ENCODE measurements at regions of chr16 and their contacts with region 1.

Region 1: GRCh38 chr16:66650707-66651473 is 45.7 kb downstream of the CMTM4 start:
- DNase-seq: peak; percentile 55
- H3K4me3 ChIP-seq: peak overlapping the region; percentile 5; the same call in 1 of the 2 replicates
- H3K27ac ChIP-seq: no peak overlapping the region
- H3K27me3 ChIP-seq: no peaks in the 10 kb centered on the region
- CTCF ChIP-seq: peak; percentile 96

Region 2: DNA sequence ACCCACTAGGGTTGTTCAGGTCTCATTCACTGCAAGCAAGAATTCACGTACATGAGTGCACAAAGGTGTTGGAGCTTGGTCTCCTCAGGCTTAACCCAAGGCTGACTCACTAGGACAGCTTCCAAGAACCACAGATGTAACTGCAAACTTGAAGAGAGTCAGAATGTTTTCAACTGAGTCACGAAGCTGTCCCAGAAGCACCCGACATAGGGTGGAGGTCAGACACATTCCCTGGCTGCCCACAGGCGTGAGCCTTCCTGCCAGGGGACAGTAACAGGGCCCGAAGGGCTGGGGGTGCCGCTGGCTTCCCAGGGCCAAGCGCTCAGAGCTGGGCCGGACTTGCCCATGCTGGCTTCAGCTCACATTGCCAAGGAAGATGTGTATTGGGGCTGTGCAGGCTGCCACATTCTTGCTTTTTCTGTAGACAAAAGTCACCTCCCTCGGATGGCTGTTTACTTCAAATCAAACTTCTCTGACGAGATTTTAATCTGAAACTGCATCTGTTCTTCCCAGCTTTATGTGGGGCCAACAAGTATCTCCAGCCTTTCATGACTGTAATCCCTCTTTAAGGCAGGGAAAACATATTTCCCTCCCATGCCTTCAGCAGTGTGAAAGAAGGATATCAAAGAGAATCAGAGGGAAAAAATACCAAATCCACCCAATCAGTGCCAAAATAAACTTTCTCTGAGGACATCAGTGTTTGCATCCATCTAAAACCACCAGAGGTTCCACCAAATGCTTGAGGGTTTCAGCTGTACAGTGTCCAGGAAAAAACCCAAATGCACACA is 32.1 kb before region 1 on chr16:
- CTCF ChIA-PET with region 1: interaction called, 33 read pairs
- POLR2A ChIA-PET with region 1: no interaction called
- DNase-seq: peak; percentile 81
- H3K4me3 ChIP-seq: no peak overlapping the region
- H3K27ac ChIP-seq: peak overlapping the region; percentile 88
- H3K27me3 ChIP-seq: no peaks in the 10 kb centered on the region
- CTCF ChIP-seq: no peak

Region 3: GRCh38 chr16:66639091-66639885 is 11.6 kb before region 1 on chr16:
- CTCF ChIA-PET with region 1: interaction called, 49 read pairs
- POLR2A ChIA-PET with region 1: interaction called, 3 read pairs
- DNase-seq: no peak
- H3K4me3 ChIP-seq: no peak overlapping the region
- H3K27ac ChIP-seq: no peak overlapping the region
- H3K27me3 ChIP-seq: no peaks in the 10 kb centered on the region
- CTCF ChIP-seq: no peak

Region 4: GRCh38 chr16:66728117-66728787 is 77.4 kb after region 1 on chr16:
- CTCF ChIA-PET with region 1: interaction called, 12 read pairs
- POLR2A ChIA-PET with region 1: no interaction called
- DNase-seq: no peak
- H3K4me3 ChIP-seq: no peak overlapping the region
- H3K27ac ChIP-seq: no peak overlapping the region
- H3K27me3 ChIP-seq: no peaks in the 10 kb centered on the region
- CTCF ChIP-seq: peak; percentile 66

Region 5: DNA sequence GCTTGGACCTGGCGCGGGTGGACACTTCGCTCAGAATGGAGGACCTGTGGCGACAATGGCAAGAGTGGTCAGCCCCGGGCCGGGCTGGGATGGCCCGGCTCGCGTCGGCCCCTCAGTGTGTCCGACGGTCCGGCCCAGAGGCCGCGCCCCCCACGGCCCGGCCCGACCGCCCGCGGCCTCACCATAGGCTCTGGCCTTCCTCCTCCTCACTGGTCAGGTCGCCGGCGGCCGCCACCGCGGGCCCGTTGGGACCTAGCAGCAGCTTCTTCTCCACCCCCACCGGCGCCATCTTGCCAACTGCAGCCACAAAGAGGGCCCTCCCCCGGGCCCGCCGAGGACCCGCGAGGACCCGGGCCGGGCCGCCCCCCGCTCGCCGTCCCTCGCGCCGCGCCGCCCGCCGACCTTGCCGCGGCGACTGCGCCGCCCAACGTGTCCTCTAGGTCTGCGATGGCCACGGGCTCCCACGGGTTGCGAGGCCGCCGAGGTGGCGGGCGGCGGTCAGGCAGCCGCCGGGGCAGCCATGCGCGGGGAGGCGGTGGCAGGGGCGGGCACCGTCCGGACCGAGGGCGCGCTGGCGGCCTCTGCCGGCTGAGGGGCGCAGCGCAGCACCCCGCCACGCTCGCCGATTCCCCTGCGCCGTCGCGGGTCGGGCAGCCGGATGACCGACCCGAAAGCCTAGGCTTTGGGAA is 100.6 kb after region 1 on chr16 and contains the start of gene DYNC1LI2:
- CTCF ChIA-PET with region 1: interaction called, 17 read pairs
- POLR2A ChIA-PET with region 1: no interaction called
- DNase-seq: peak; percentile 20
- H3K4me3 ChIP-seq: peak within 1 kb of the TSS; percentile 97
- H3K27ac ChIP-seq: peak within 1 kb of the TSS; percentile 31
- H3K27me3 ChIP-seq: peaks cover 6% of the 10 kb centered on the region
- CTCF ChIP-seq: peak; percentile 58
- polyA plus RNA-seq, gene DYNC1LI2: 86.7 and 88.5 TPM in 2 replicates

Region 6: GRCh38 chr16:67183627-67184328 is 532.9 kb after region 1 on chr16 and contains the start of gene MATCAP1:
- CTCF ChIA-PET with region 1: no interaction called
- POLR2A ChIA-PET with region 1: no interaction called
- DNase-seq: peak; percentile 90
- H3K4me3 ChIP-seq: peak within 1 kb of the TSS; percentile 71
- H3K27ac ChIP-seq: peak within 1 kb of the TSS; percentile 88
- H3K27me3 ChIP-seq: no peaks in the 10 kb centered on the region
- CTCF ChIP-seq: no peak
- polyA plus RNA-seq, gene MATCAP1: 13.9 and 18.1 TPM in 2 replicates

Measured in AG04450 (cell line).